Right ventricle myocardium superior (tissue), 1 donor: ENCODE measurements at regions of chr1 and their contacts with region 1.

Region 1: GRCh38 chr1:110209715-110210603 is at the start of gene KCNC4:
- DNase-seq: peak; percentile 95
- ATAC-seq: peak; percentile 96
- total RNA-seq, gene KCNC4: 4.2 TPM

Region 2: DNA sequence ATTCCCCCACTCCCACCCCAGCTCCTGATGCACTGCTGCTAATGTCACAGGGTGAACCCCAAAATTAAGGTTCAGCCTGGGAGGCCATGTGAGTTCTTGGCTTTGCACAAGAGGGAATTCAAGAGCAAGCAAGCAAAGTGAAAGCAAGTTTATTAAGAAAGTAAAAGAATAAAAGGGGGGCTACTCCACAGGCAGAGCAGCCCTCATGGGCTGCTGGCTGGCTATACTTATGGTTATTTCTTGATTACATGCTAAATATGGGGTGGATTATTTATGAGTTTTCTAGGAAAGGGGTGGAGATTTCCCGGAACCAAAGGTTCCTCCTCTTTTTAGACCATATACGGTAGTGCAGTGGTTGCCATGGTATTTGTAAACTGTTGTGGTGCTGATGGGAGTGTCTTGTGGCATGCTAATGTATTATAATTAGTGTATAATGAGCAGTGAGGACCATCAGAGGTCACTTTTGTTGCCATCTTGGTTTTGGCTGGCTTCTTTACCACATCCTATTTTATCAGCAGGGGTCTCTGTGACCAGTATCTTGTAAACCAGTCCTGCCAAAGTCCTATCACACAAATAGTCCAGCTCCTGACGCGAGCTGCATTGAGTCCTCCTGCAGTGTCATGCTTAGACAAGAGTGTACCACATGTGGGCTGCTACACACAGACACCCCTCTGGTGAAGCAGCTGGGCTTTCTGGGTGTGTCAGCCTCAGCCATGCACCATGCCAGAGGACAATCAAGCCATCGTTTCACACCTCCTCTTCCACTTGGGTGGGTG is 345.7 kb before region 1 on chr1:
- intact Hi-C with region 1: no loop called
- DNase-seq: no peak
- ATAC-seq: peak; percentile 20

Region 3: DNA sequence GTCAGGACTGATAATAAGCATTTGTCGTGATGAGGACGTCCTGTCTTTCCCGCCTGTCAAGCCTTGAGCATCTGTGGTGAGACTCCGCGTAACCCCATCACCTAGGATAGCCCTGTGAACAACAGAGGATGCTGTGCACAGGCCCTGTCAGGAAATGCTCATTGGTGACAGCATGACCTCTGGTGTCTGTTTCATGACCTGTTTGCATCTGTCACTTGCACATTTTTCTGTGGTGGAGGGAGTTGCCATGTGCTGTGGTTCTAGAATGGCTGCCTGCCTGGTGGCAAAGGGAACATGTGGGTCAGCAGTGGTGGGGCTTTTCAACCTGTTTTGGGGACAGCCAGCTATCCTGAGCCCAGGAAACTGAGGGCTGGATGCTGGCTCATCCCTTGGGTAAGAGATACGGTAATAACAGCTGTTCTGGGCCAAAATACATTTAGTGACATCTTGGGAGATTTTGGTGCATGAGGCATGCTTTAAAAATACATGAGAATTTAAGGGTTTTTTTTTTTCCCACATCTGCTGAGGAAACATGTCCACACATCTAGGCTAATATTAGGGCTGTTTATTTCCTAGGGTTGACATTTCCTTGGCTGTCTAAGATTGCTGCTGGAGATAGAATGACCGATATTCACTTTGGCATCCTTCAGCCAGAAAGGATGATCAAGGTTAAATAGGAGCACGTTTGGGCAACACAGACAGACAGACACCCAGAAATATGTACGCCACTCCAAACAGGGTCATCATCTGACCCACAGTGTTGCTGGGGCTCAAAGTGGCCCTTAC is 53.1 kb after region 1 on chr1:
- intact Hi-C with region 1: loop called (anchors 5 kb)
- DNase-seq: no peak
- ATAC-seq: no peak

Region 4: GRCh38 chr1:110312188-110313121 is 102.5 kb after region 1 on chr1:
- intact Hi-C with region 1: loop called (anchors 2 kb)
- DNase-seq: peak; percentile 87
- ATAC-seq: peak; percentile 98

Region 5: GRCh38 chr1:110407260-110408210 is 197.6 kb after region 1 on chr1 and contains the start of gene LAMTOR5:
- intact Hi-C with region 1: no loop called
- DNase-seq: peak; percentile 96
- ATAC-seq: peak; percentile 97
- total RNA-seq, gene LAMTOR5: 256 TPM

Region 6: GRCh38 chr1:110495926-110496600 is 286.1 kb after region 1 on chr1:
- intact Hi-C with region 1: loop called (anchors 10 kb)
- DNase-seq: peak; percentile 79
- ATAC-seq: peak; percentile 91